ENCODE measurements at regions of chr9 and their contacts with region 1.

Region 1: GRCh38 chr9:33167046-33167808 is at the start of gene B4GALT1:
- DNase-seq: peak; percentile 99
- ATAC-seq: peak; percentile 83
- H3K4me3 Mint-ChIP-seq: peak within 1 kb of the TSS; percentile 95
- H3K27ac Mint-ChIP-seq: peak within 1 kb of the TSS; percentile 97
- H3K4me1 Mint-ChIP-seq: peaks cover 50% of the 10 kb centered on the region
- H3K27me3 Mint-ChIP-seq: no peaks in the 10 kb centered on the region
- total RNA-seq, gene B4GALT1: 44.5 to 47.1 TPM

Region 2: DNA sequence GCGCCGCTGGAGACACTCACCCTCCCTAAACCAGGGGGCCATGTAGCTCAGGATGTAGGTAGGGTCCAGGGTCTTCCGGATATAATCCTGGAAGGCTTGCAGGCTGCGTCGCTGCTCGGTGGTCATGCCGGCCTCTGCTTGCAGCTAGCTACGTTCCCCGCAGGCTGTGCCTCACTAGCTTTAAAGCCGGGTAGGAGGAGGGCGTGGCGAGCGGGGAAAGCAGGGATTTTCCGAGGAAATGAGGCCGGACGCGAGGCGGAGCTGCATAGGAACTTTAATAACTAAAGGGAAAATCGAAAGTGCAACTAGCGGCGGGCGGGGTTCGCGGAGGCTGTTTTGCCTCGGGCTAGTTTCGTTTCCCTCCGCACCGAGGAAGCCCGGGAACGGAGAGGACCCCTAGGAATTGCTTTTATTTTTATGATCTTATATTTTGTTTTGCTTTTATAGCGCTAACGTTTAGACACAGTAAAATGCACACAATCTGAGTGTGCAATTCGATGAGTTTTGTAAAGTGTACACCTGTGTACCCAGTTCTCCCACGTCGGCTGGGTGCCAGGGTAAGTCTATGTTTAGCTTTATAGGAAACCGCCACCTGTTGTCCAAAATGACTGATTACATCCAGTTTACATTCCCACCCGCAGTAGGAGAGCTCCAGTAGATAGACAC is 641.1 kb before region 1 on chr9 and contains the start of gene RIGI:
- CTCF ChIA-PET with region 1: no interaction called
- POLR2A ChIA-PET with region 1: no interaction called
- intact Hi-C with region 1: loop called in 1 of 2 experiments (anchors 10 kb)
- DNase-seq: peak; percentile 86
- ATAC-seq: peak; percentile 78
- H3K4me3 Mint-ChIP-seq: peak within 1 kb of the TSS; percentile 80
- H3K27ac Mint-ChIP-seq: peak within 1 kb of the TSS; percentile 90
- H3K4me1 Mint-ChIP-seq: peaks cover 41% of the 10 kb centered on the region
- H3K27me3 Mint-ChIP-seq: no peaks in the 10 kb centered on the region
- total RNA-seq, gene RIGI: 8.9 to 9.7 TPM

Region 3: DNA sequence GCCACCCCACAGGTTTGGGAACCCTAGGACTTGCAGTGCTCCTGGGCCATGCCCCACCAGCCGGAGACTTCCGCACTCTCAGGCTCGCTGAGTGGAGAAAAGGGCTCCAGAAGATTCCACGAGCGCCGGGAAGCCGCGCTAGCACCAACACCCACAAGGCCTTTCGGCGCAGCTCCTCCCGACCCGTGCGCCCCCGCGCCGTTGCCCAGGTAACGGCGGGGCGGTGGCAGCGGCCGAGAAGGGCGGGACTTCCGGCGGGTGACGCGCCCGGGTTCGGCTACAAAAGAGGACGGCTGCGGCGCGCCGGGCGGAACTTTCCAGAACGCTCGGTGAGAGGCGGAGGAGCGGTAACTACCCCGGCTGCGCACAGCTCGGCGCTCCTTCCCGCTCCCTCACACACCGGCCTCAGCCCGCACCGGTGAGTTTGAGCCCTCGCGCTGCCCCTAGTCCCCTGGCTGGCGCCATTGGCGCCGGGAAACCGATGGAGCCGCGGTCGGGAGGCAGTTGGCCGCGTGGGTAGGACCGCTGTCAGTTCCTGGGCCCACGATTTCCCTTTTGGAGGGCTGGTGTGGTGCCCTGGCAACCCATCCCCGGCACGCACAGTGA is 142.2 kb before region 1 on chr9 and contains the start of gene DNAJA1:
- CTCF ChIA-PET with region 1: no interaction called
- POLR2A ChIA-PET with region 1: interaction called, 12 read pairs
- intact Hi-C with region 1: loop called (anchors 1 to 5 kb)
- DNase-seq: peak; percentile 97
- ATAC-seq: peak; percentile 82
- H3K4me3 Mint-ChIP-seq: peak within 1 kb of the TSS; percentile 98
- H3K27ac Mint-ChIP-seq: peak within 1 kb of the TSS; percentile 94
- H3K4me1 Mint-ChIP-seq: peaks cover 59% of the 10 kb centered on the region
- H3K27me3 Mint-ChIP-seq: no peaks in the 10 kb centered on the region
- total RNA-seq, gene DNAJA1: 198 to 266 TPM

Region 4: GRCh38 chr9:33130508-33130911 is 36.7 kb before region 1 on chr9:
- CTCF ChIA-PET with region 1: interaction called, 3 read pairs
- POLR2A ChIA-PET with region 1: interaction called, 3 read pairs
- intact Hi-C with region 1: loop called (anchors 2 to 5 kb)
- DNase-seq: peak; percentile 43
- ATAC-seq: peak; percentile 97
- H3K4me3 Mint-ChIP-seq: no peak overlapping the region
- H3K27ac Mint-ChIP-seq: peak overlapping the region; percentile 85
- H3K4me1 Mint-ChIP-seq: peaks cover 34% of the 10 kb centered on the region
- H3K27me3 Mint-ChIP-seq: no peaks in the 10 kb centered on the region

Region 5: DNA sequence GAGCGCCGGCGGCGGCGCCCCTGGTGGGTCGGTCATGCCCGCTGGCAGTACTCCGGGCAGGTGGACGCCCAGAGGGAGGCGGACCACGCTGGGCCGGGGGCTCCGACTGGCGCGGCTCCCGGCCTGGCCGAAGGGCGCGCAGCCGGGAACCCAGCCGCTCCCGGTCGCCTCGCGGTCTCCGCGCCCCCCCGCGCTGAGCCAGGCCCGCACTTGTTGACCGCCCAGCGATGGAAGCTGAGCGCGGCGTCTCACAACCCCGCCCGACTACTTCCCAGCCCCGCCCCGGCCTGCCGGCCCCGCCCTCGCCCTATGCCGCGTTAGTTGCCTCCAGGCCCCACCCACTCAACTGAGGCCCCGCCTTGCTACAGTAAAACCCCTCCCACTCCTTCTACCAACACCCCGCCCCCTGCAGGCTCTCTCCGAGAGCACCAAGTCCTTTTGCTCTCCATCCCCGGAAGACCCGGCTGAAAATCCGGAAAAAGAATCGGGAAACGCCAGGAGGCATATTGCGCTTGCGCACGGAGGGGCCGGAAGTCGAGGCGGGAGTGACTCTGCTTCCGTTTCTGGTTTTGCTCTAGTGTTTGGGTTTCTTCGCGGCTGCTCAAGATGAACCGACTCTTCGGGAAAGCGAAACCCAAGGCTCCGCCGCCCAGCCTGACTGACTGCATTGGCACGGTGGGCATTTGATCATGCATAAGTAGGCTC is 97.4 kb after region 1 on chr9 and contains the starts of genes BAG1 and CHMP5:
- CTCF ChIA-PET with region 1: no interaction called
- POLR2A ChIA-PET with region 1: no interaction called
- intact Hi-C with region 1: loop called (anchors 1 kb)
- DNase-seq: peak; percentile 100
- ATAC-seq: peak; percentile 96
- H3K4me3 Mint-ChIP-seq: peak within 1 kb of the TSS; percentile 97
- H3K27ac Mint-ChIP-seq: peak within 1 kb of the TSS; percentile 99
- H3K4me1 Mint-ChIP-seq: peaks cover 51% of the 10 kb centered on the region
- H3K27me3 Mint-ChIP-seq: no peaks in the 10 kb centered on the region
- total RNA-seq, gene BAG1: 47.9 to 65.8 TPM
- total RNA-seq, gene CHMP5: 102 to 106 TPM

Region 6: GRCh38 chr9:33430942-33431341 is 263.7 kb after region 1 on chr9:
- CTCF ChIA-PET with region 1: no interaction called
- POLR2A ChIA-PET with region 1: no interaction called
- intact Hi-C with region 1: no loop called
- DNase-seq: no peak
- ATAC-seq: peak; percentile 47
- H3K4me3 Mint-ChIP-seq: no peak overlapping the region
- H3K27ac Mint-ChIP-seq: no peak overlapping the region
- H3K4me1 Mint-ChIP-seq: peaks cover 9% of the 10 kb centered on the region
- H3K27me3 Mint-ChIP-seq: no peaks in the 10 kb centered on the region

Region 7: GRCh38 chr9:33473643-33474352 is 306.6 kb after region 1 on chr9 and contains the start of gene NOL6:
- CTCF ChIA-PET with region 1: no interaction called
- POLR2A ChIA-PET with region 1: no interaction called
- intact Hi-C with region 1: loop called in 1 of 2 experiments (anchors 5 kb)
- DNase-seq: peak; percentile 98
- ATAC-seq: peak; percentile 100
- H3K4me3 Mint-ChIP-seq: peak within 1 kb of the TSS; percentile 100
- H3K27ac Mint-ChIP-seq: peak within 1 kb of the TSS; percentile 95
- H3K4me1 Mint-ChIP-seq: peaks cover 22% of the 10 kb centered on the region
- H3K27me3 Mint-ChIP-seq: no peaks in the 10 kb centered on the region
- total RNA-seq, gene NOL6: 39.0 to 39.4 TPM